ENCODE measurements at regions of chr7 and their contacts with region 1.

Region 1: DNA sequence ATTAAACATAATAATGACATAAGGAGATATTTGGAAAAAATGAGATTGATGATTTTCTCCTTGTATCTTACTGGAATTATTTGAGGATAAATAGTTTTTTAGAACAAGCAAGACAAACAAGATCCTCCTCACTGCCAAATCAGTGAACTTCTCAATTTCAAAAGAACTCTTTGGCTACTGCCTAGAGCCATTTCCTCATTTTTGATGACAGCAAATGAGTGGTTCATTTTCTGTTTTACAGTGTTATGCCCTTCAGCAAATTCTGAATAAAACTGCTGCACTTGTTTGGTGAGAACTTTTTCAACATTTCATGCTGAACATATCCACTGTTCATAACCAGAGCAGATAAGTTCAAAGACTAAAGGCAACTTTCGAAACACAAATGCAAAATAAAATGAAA is 42.5 kb upstream of the AHR start:
- DNase-seq: no peak
- H3K4me3 Mint-ChIP-seq: no peak overlapping the region
- H3K27ac Mint-ChIP-seq: no peak overlapping the region
- H3K4me1 Mint-ChIP-seq: peaks cover 21% of the 10 kb centered on the region
- H3K27me3 Mint-ChIP-seq: no peaks in the 10 kb centered on the region

Region 2: GRCh38 chr7:16999541-17000267 is 256.2 kb before region 1 on chr7:
- CTCF ChIA-PET with region 1: no interaction called
- POLR2A ChIA-PET with region 1: no interaction called
- intact Hi-C with region 1: loop called (anchors 1 kb)
- DNase-seq: no peak
- H3K4me3 Mint-ChIP-seq: no peak overlapping the region
- H3K27ac Mint-ChIP-seq: peak overlapping the region; percentile 56
- H3K4me1 Mint-ChIP-seq: peaks cover 8% of the 10 kb centered on the region
- H3K27me3 Mint-ChIP-seq: no peaks in the 10 kb centered on the region

Region 3: DNA sequence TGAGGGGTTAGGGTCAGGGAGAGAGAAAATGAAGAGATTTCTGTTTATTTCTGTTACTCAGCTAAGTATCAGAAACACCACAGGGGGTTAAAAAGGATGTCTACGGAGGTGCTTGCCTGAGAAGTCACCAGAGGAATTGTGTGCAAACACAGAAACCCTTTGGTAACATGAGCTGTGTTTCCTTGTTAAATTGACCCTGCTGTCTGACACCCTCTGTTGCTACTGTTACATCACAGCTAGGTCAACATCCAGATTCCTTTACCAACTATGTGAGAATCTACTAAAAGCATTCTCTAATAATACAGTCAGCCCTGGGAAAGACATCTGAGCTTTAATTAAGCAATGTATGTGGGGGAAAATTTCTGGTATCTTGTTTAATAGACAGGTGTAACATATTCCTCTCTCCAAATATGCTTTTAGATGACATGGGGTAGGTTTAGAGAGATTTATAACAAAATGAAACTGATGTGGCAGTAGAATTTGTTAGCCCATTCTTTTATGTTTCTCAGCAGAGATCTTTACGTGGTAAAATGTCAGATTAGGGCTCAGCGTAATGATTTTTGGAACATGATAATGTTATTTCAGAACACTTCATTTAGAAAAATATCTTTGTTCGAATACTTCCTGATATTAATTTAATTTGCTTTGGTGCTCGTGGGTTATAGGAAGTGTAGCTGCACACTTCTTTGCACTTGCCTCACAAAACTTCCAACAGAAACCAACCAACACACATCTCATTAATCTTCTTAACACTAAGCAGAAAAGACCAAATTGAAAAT is 125.5 kb before region 1 on chr7:
- CTCF ChIA-PET with region 1: no interaction called
- POLR2A ChIA-PET with region 1: no interaction called
- intact Hi-C with region 1: loop called (anchors 1 kb)
- DNase-seq: no peak
- H3K4me3 Mint-ChIP-seq: no peak overlapping the region
- H3K27ac Mint-ChIP-seq: no peak overlapping the region
- H3K4me1 Mint-ChIP-seq: peaks cover 38% of the 10 kb centered on the region
- H3K27me3 Mint-ChIP-seq: peaks cover 2% of the 10 kb centered on the region

Region 4: DNA sequence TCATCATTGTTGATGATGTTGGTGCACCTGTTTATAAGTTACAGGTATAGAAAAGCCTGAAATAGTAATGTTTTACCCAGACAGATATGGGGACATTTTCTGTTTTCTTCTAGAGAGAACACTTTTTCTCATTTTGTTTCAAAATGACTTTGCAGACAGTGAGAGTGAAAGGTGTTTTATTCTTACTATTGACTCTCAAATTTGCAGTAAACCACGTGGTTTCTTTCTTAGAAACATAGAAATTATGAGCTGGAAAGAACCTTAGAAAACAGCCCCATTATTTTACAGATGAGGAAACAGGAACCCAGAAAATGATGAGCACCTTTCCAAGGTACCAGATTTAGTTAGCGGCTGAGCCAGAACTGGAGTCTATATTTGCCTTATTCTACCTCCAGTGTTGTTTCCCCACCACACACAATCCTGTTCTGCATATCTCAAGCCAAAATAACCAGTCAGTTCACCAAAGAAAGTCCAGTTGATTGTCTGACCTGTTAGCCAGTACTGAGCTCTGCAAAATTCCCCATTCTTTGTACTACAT is 96.4 kb before region 1 on chr7:
- CTCF ChIA-PET with region 1: interaction called, 3 read pairs
- POLR2A ChIA-PET with region 1: no interaction called
- intact Hi-C with region 1: loop called (anchors 1 kb)
- DNase-seq: peak; percentile 33
- H3K4me3 Mint-ChIP-seq: no peak overlapping the region
- H3K27ac Mint-ChIP-seq: peak overlapping the region; percentile 70
- H3K4me1 Mint-ChIP-seq: peaks cover 38% of the 10 kb centered on the region
- H3K27me3 Mint-ChIP-seq: peaks cover 14% of the 10 kb centered on the region

Region 5: GRCh38 chr7:17234398-17235031 is 21.4 kb before region 1 on chr7:
- CTCF ChIA-PET with region 1: no interaction called
- POLR2A ChIA-PET with region 1: interaction called, 3 read pairs
- intact Hi-C with region 1: loop called (anchors 1 kb)
- DNase-seq: peak; percentile 83
- H3K4me3 Mint-ChIP-seq: peak overlapping the region; percentile 71
- H3K27ac Mint-ChIP-seq: peak overlapping the region; percentile 89
- H3K4me1 Mint-ChIP-seq: peaks cover 48% of the 10 kb centered on the region
- H3K27me3 Mint-ChIP-seq: no peaks in the 10 kb centered on the region

Region 6: DNA sequence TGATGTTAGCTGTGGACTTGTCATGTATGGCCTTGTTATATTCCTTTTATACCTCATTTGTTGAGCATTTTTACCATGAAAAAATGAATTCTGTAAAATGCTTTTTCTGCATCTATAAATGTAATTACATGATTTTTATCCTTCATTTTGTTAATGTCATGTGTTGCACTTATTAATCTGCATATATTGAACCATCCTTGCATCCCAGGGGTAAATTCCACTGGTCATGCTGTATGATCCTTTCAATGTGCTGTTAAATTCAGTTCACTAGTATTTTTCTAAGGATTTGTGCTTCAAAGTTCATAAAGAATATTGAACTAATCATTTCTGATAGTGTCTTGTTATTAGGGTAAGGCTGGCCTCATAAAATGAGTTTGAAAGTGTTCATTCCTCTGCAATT is 10.6 kb after region 1 on chr7:
- CTCF ChIA-PET with region 1: no interaction called
- POLR2A ChIA-PET with region 1: no interaction called
- intact Hi-C with region 1: no loop called
- DNase-seq: no peak
- H3K4me3 Mint-ChIP-seq: no peak overlapping the region
- H3K27ac Mint-ChIP-seq: no peak overlapping the region
- H3K4me1 Mint-ChIP-seq: peaks cover 7% of the 10 kb centered on the region
- H3K27me3 Mint-ChIP-seq: no peaks in the 10 kb centered on the region

Region 7: GRCh38 chr7:17444673-17445072 is 188.7 kb after region 1 on chr7:
- CTCF ChIA-PET with region 1: no interaction called
- POLR2A ChIA-PET with region 1: no interaction called
- intact Hi-C with region 1: loop called (anchors 1 kb)
- DNase-seq: no peak
- H3K4me3 Mint-ChIP-seq: no peak overlapping the region
- H3K27ac Mint-ChIP-seq: no peak overlapping the region
- H3K4me1 Mint-ChIP-seq: peaks cover 6% of the 10 kb centered on the region
- H3K27me3 Mint-ChIP-seq: peaks cover 18% of the 10 kb centered on the region

Measured in activated CD4-positive, alpha-beta memory T cell treated with anti-CD3 and anti-CD28 coated beads for 36 hours (primary cell).